Psoas muscle (tissue), 8 donors: ENCODE measurements at regions of chr11 and their contacts with region 1.

Region 1: DNA sequence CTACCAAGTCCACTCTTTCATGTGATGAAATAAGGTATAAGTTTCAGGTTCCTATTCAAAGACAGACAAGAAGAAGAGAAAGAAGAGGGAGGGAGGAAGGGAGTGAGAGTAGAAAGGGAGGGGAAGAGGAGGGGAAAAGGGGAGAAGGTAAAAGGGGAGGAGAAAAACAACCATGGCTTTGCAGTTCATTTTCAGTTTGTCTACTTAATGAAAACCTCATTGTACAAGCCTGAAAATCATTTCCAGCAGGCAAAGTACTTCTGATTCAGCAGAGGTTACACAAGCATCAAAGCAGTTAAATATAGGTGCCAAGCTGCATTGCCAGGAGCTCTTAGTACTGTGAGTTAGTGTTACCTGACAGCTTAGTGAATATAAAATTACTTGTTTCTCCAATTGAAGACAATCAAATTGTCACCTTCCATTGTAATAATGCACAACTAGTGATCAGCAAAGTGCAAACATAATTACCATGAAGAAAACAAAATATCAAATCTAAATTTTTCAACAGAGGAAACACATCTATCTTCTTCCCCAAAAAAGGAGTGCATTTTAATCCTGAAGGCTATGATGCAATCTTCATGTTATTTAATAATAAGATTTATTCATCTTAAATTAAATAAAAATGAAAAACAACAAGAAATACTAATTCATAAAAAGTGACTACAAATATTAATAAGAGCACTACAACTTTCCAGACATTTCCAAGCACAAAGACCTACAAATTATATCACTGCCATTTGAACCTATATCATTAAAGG is 8.2 kb downstream of the SOX6 start:
- DNase-seq: no peak
- ATAC-seq: peak; percentile 77 to 92 (median 87)
- H3K4me3 ChIP-seq: peak overlapping the region; percentile 45
- H3K27ac ChIP-seq: peak overlapping the region; percentile 83
- H3K4me1 ChIP-seq: peaks cover 37% of the 10 kb centered on the region
- H3K27me3 ChIP-seq: no peaks in the 10 kb centered on the region
- CTCF ChIP-seq: no peak

Region 2: DNA sequence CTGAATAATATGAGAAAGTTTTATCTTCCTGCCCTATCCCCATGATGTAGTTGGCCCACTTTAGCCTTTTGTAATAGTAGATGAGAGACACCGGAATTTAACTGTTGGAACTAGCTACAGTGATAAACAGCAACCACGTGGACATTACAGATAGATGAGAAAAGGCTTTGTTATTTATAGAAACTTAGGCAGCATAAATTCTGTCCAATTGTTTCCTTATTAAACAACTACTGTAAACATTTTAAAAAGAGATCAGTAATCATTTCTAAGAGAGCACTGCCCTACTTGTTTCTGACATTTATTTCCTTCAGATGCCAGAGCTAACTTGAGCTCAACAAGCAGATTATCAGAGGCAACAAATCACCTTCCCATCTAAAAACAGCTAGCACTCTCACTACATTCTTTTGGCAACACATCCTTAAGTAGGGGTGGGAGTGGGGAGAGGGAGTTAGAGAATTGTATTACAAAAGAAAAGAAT is 54.9 kb before region 1 on chr11:
- intact Hi-C with region 1: loop called in 1 of 2 experiments (anchors 5 kb)
- DNase-seq: no peak
- ATAC-seq: peak; percentile 72 to 89 (median 81)
- H3K4me3 ChIP-seq: peak overlapping the region; percentile 35
- H3K27ac ChIP-seq: peak overlapping the region; percentile 84
- H3K4me1 ChIP-seq: peaks cover 65% of the 10 kb centered on the region
- H3K27me3 ChIP-seq: no peaks in the 10 kb centered on the region
- CTCF ChIP-seq: no peak

Region 3: DNA sequence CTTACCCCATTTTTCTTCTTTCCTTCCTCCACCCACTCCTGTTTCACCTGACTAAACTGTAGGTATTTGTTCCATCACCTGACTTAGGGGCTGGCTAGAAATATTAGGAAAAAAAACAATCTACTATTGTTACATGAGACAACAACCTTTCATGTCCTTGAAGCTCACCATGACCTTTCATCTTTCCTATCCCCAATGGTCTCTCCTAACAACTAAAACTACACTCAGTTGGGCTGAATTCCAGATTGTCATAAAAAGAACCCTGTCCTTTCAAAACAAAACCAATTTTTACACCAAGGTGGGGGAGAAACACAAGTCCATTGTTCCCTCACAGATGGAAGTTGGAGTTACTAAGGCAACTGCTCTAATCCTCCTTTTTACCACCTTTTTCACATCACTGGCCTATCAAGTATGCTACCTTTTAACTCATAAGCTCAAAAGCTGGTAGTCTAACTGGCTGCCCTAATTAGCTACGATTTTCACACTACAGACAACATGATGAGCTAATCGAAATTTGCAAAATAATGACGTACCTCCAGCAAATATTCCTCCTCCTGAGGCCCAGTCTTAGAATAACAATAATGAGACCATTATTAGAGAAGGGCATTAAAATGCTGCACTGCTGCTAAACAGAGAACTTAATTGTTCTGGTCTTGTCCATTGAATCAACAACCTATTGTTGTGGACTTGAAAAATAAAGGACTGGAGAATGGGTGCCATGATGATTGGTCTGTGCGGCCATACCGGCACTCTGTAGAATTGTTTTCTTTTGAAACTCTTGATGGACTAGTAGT is 54.7 kb after region 1 on chr11:
- intact Hi-C with region 1: no loop called
- DNase-seq: no peak
- ATAC-seq: no peak
- H3K4me3 ChIP-seq: no peak overlapping the region
- H3K27ac ChIP-seq: no peak overlapping the region
- H3K4me1 ChIP-seq: peaks cover 9% of the 10 kb centered on the region
- H3K27me3 ChIP-seq: no peaks in the 10 kb centered on the region
- CTCF ChIP-seq: no peak

Region 4: GRCh38 chr11:16690086-16690485 is 342.0 kb after region 1 on chr11:
- intact Hi-C with region 1: no loop called
- DNase-seq: no peak
- ATAC-seq: no peak
- H3K4me3 ChIP-seq: no peak overlapping the region
- H3K27ac ChIP-seq: no peak overlapping the region
- H3K4me1 ChIP-seq: no peaks in the 10 kb centered on the region
- H3K27me3 ChIP-seq: no peaks in the 10 kb centered on the region
- CTCF ChIP-seq: no peak